Heart right ventricle (tissue), 16 donors: ENCODE measurements at regions of chr1 and their contacts with region 1.

Region 1: DNA sequence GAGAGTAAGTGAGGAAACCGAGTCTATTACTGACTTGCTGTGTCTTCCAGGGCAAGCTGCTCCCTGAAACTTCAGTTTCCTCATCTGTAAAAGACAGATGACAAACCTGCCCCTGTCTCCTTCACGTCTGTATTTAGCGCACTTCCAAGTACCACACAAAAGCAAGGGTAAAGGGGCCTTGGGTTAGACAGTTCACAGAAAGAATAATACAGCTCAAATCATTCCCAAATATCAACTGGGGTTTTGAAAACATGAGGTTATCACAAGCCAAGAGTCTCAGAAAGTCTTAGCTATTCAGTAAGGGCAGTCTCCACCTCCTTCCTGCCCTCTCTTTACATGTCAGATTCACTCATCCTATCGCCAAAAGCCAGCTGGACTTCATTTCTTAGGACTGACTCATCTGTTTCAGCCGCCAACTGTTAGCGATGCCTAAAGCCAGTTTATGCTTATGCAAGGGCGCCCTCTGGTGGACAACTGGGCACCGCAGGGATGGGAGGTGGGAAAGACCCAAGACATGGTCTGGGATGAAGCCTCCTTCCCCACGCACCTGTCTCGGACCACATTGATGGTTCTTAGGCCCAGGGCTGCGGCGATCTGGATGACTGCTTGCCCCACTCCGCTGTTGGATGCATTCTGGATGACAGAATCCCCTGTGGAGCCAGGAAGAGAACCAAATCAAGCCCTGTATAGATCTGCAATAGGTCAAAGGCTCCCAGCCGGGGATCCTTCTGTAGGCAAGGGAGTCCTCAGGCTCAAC is 21.1 kb upstream of the SRSF4 start:
- DNase-seq: peak; percentile 94 to 96
- ATAC-seq: peak; percentile 86 to 96 (median 95)
- H3K4me3 ChIP-seq: no peak overlapping the region
- H3K27ac ChIP-seq: peak overlapping the region in 9 of 10 donors; percentile 6 to 83 (median 77)
- H3K4me1 ChIP-seq: peaks cover 3 to 19% (median 12%) of the 10 kb centered on the region in 9 donors
- H3K27me3 ChIP-seq: no peaks in the 10 kb centered on the region
- CTCF ChIP-seq: peak; percentile 95 to 99 (median 97)

Region 2: GRCh38 chr1:28792644-28793121 is 410.1 kb before region 1 on chr1:
- intact Hi-C with region 1: loop called in 8 of 10 experiments (anchors 5 to 10 kb)
- DNase-seq: no peak
- ATAC-seq: peak in 2 of 8 donors; percentile 56 to 74
- H3K4me3 ChIP-seq: no peak overlapping the region
- H3K27ac ChIP-seq: no peak overlapping the region
- H3K4me1 ChIP-seq: peaks cover 0 to 11% (median 0%) of the 10 kb centered on the region in 9 donors
- H3K27me3 ChIP-seq: peaks cover 0 to 4% (median 0%) of the 10 kb centered on the region in 7 donors
- CTCF ChIP-seq: peak in 2 of 9 donors; percentile 8 to 38

Region 3: DNA sequence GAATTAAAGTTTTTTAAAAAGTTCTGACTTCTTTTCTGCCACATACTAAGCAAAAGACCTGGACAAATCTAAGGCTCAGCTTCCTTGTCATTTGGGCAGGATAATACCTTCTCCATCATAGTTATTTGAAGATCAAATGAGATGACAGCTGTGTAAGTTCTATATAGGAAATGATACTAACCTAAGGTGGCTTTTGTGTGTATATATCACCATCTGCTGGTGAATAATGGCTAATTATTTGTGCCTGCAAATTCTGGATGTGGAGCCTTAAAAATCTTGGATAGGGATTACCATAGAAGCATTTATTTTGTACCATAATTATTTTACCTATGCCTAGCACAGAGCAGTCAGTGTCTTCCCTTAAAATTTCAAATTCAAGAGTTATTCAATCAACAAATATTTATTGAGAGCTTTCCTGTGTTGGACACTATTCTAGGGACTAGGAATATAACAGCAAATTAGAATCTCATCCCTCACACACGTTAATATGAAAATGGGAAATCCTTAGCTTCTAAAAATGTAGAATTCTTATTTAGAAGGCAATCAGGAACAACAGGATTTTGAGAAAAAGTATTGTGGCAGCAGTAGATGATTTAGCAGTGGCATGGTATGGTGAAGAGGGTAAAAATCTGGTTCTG is 168.8 kb before region 1 on chr1:
- intact Hi-C with region 1: loop called in 6 of 10 experiments (anchors 2 to 10 kb)
- DNase-seq: no peak
- ATAC-seq: peak in 3 of 8 donors; percentile 47 to 65 (median 55)
- H3K4me3 ChIP-seq: no peak overlapping the region
- H3K27ac ChIP-seq: no peak overlapping the region
- H3K4me1 ChIP-seq: peaks cover 0 to 13% (median 0%) of the 10 kb centered on the region in 9 donors
- H3K27me3 ChIP-seq: no peaks in the 10 kb centered on the region
- CTCF ChIP-seq: peak; percentile 30 to 80 (median 72)

Region 4: DNA sequence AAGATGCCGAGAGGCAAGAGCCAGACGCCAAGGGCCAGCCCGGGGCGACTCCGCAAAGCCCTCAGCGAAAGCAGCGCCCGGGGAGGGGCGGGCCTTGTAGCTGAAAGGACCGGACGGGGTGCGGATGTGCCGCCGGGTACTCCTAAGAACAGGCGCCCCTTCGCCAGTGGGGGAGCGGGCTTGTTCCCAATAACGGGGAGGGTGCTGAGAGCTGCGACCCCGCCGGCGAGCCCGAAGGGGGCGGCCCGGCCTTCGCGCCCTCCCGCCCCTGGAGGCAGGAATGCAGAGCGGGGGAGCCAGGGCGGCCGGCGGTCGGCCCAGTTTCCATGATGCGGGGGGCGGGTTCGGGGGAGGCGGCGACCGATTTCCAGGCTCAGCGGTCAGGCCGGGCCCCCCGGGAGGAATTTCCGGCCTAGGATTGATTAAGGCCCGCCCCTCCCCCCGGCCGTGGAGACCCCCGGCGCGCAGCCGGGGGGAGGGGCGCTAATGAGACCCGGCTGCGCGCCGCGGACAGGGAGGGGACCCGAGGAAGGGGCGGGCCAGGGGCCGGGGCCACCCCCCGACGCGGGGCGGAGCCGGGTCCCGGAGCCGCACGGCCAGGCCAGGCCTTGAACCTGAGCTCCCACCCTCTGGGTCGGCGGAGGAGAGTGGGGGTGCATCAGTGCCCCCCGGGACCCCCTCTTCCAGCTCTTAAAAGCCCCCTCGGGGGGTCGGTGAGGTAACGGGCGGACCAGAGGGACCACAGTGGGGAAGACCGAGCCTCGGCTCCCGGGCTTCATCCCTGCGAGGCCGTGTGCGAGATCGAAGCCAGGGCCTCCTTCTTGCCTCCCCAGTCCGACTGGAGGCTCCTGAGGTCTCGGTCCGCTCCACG is 78.2 kb before region 1 on chr1:
- intact Hi-C with region 1: loop called in 1 of 10 experiments (anchors 1 kb)
- DNase-seq: peak; percentile 83 to 90
- ATAC-seq: peak; percentile 73 to 84 (median 82)
- H3K4me3 ChIP-seq: peak overlapping the region; percentile 59 to 99 (median 70)
- H3K27ac ChIP-seq: peak overlapping the region; percentile 81 to 97 (median 90)
- H3K4me1 ChIP-seq: peaks cover 8 to 36% (median 28%) of the 10 kb centered on the region in 9 donors
- H3K27me3 ChIP-seq: peaks cover 0 to 63% (median 18%) of the 10 kb centered on the region in 7 donors
- CTCF ChIP-seq: peak; percentile 54 to 80 (median 76)

Region 5: DNA sequence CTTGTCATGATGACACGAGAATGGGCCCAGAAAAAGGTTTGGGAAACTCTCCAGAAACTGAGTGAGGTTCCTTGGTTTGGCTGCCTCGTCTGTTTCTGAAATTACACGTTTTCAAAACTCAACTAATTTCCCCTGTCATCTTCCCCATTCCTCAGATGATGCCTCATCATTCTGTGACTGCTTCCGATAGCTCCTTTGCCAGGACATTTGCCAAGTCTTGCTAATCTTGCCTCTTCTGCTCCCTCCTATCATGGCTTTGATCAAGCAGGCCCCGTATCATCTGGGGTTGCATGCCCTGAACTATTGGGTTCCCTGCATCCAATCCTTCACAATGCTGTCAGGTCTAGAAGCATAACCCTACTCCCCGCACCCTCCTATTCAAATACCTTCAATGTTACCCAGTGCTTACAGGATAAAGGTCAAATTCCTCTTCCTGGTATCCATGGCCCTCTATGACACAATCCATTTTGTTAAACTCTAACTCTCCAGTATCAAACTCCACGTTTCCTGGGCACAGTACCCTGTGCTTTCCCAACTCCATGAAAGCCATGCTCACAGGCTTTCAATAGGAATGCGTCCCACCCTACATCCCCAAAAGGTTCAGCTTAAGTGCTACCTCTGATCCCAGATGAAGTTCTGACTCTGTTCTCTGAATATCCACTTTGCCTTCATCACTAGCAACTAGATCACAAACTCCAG is 56.9 kb before region 1 on chr1:
- intact Hi-C with region 1: no loop called
- DNase-seq: no peak
- ATAC-seq: peak in 4 of 8 donors; percentile 32 to 73 (median 52)
- H3K4me3 ChIP-seq: no peak overlapping the region
- H3K27ac ChIP-seq: peak overlapping the region in 1 of 10 donors; percentile 25
- H3K4me1 ChIP-seq: peaks cover 0 to 8% (median 0%) of the 10 kb centered on the region in 9 donors
- H3K27me3 ChIP-seq: no peaks in the 10 kb centered on the region
- CTCF ChIP-seq: no peak